CD4-positive, alpha-beta memory T cell (primary cell): ENCODE measurements at regions of chr19 and their contacts with region 1.

Region 1: DNA sequence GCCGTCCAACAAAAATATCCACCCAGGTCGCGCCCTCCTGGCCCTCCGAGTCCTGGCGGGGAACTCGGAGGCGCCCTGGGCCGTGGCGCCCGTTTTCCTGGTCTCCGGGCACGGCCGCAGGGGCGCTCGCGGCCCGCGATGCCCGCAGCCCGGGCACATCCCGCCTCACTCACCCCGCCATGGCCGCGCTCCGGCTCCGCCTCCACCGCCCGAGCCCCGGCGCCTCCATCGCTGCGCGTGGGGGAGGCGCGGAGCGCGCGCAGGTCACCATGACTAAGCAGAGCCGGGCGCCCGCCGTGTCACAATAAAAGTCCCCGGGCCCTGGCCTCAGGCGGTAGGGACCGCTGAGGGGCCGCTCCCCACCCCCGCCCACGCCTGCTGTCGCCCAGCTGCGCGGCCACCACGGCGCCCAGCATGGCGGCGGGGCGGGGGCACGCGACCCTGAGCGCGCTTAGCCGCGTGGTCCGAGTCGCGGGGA is 593 bp downstream of the KEAP1 start:
- DNase-seq: peak; percentile 83 to 88 (median 87)
- H3K4me3 ChIP-seq: peak overlapping the region; percentile 50 to 97
- H3K4me3 Mint-ChIP-seq: peak overlapping the region; percentile 84 to 90 (median 88)
- H3K27ac ChIP-seq: peak overlapping the region; percentile 87
- H3K27ac Mint-ChIP-seq: peak overlapping the region; percentile 81 to 94 (median 90)
- H3K4me1 ChIP-seq: peaks cover 47% of the 10 kb centered on the region
- H3K4me1 Mint-ChIP-seq: peaks cover 21 to 49% (median 35%) of the 10 kb centered on the region in 4 donors
- H3K27me3 ChIP-seq: no peaks in the 10 kb centered on the region
- H3K27me3 Mint-ChIP-seq: no peaks in the 10 kb centered on the region

Region 2: GRCh38 chr19:10422046-10422461 is 80.5 kb before region 1 on chr19:
- CTCF ChIA-PET with region 1: no interaction called
- POLR2A ChIA-PET with region 1: no interaction called
- intact Hi-C with region 1: no loop called
- DNase-seq: no peak
- H3K4me3 ChIP-seq: no peak overlapping the region
- H3K4me3 Mint-ChIP-seq: peak overlapping the region in 5 of 8 donors; percentile 5 to 76 (median 39)
- H3K27ac ChIP-seq: no peak overlapping the region
- H3K27ac Mint-ChIP-seq: peak overlapping the region in 4 of 7 donors; percentile 68 to 99 (median 86)
- H3K4me1 ChIP-seq: peaks cover 73% of the 10 kb centered on the region
- H3K4me1 Mint-ChIP-seq: peaks cover 27 to 71% (median 48%) of the 10 kb centered on the region in 4 donors
- H3K27me3 ChIP-seq: peaks cover 52% of the 10 kb centered on the region
- H3K27me3 Mint-ChIP-seq: peaks cover 38 to 52% of the 10 kb centered on the region in 2 donors

Region 3: DNA sequence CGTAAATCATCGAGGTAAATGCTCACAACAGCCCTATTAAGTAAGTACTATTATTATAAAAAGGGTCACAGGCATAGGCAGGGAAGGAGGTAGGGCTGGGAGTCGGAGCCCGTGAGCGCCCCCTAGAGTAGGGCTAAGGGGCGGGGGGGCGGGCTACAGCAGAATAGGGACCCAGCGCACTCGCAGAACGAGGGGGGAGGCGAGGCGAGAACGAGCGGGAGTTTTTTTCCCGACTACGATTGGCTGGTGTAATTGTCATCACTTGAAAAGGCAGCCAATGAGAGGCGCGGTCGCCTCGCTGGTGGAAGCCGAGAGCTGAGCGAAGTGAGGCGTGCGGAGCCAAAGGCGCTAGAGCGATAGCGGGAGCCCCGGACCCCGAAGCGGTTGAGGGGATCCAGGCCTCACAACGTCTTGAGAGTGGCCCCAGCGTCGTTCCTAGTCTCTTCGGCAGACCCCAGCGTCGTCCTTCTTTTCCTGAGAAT is 23.6 kb before region 1 on chr19:
- CTCF ChIA-PET with region 1: interaction called, 6 read pairs
- POLR2A ChIA-PET with region 1: interaction called, 4 read pairs
- intact Hi-C with region 1: loop called (anchors 2 kb)
- DNase-seq: peak; percentile 87 to 95 (median 90)
- H3K4me3 ChIP-seq: peak overlapping the region in 1 of 2 donors; percentile 38
- H3K4me3 Mint-ChIP-seq: peak overlapping the region; percentile 26 to 79 (median 70)
- H3K27ac ChIP-seq: peak overlapping the region; percentile 57
- H3K27ac Mint-ChIP-seq: peak overlapping the region; percentile 70 to 92 (median 88)
- H3K4me1 ChIP-seq: peaks cover 13% of the 10 kb centered on the region
- H3K4me1 Mint-ChIP-seq: peaks cover 4 to 20% (median 7%) of the 10 kb centered on the region in 4 donors
- H3K27me3 ChIP-seq: no peaks in the 10 kb centered on the region
- H3K27me3 Mint-ChIP-seq: no peaks in the 10 kb centered on the region

Region 4: DNA sequence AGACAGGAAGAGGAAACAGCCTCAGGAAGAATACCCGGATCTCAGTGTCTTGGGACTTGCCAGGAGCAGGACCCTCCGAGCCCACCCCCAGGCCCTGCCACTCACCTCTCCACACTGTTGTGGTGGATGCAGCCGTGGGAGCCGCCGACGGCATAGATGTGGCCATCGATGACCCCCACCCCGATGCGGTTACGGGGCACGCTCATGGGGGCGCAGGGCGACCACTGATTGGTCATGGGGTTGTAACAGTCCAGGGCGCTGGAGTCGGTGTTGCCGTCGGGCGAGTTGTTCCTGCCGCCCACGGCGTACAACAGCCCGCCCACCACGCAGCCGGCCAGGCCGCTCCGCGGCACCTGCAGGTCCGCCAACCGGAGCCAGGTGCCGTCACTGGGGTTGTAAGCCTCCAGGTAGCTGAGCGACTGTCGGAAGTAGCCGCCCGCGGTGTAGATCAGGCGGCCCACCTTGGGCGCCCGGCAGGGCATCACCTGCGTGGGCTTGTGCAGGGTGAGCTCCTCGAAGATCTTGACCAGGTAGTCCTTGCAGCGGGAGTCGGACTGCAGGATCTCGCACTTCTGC is 11.0 kb before region 1 on chr19:
- CTCF ChIA-PET with region 1: interaction called, 10 read pairs
- POLR2A ChIA-PET with region 1: no interaction called
- intact Hi-C with region 1: no loop called
- DNase-seq: no peak
- H3K4me3 ChIP-seq: no peak overlapping the region
- H3K4me3 Mint-ChIP-seq: no peak overlapping the region
- H3K27ac ChIP-seq: no peak overlapping the region
- H3K27ac Mint-ChIP-seq: peak overlapping the region in 1 of 7 donors; percentile 50
- H3K4me1 ChIP-seq: no peaks in the 10 kb centered on the region
- H3K4me1 Mint-ChIP-seq: peaks cover 5 to 10% (median 9%) of the 10 kb centered on the region in 4 donors
- H3K27me3 ChIP-seq: no peaks in the 10 kb centered on the region
- H3K27me3 Mint-ChIP-seq: no peaks in the 10 kb centered on the region

Region 5: GRCh38 chr19:10532457-10532856 is 29.9 kb after region 1 on chr19:
- CTCF ChIA-PET with region 1: no interaction called
- POLR2A ChIA-PET with region 1: no interaction called
- intact Hi-C with region 1: no loop called
- DNase-seq: no peak
- H3K4me3 ChIP-seq: no peak overlapping the region
- H3K4me3 Mint-ChIP-seq: no peak overlapping the region
- H3K27ac ChIP-seq: no peak overlapping the region
- H3K27ac Mint-ChIP-seq: no peak overlapping the region
- H3K4me1 ChIP-seq: no peaks in the 10 kb centered on the region
- H3K4me1 Mint-ChIP-seq: no peaks in the 10 kb centered on the region
- H3K27me3 ChIP-seq: no peaks in the 10 kb centered on the region
- H3K27me3 Mint-ChIP-seq: peaks cover 5 to 7% of the 10 kb centered on the region in 2 donors

Region 6: DNA sequence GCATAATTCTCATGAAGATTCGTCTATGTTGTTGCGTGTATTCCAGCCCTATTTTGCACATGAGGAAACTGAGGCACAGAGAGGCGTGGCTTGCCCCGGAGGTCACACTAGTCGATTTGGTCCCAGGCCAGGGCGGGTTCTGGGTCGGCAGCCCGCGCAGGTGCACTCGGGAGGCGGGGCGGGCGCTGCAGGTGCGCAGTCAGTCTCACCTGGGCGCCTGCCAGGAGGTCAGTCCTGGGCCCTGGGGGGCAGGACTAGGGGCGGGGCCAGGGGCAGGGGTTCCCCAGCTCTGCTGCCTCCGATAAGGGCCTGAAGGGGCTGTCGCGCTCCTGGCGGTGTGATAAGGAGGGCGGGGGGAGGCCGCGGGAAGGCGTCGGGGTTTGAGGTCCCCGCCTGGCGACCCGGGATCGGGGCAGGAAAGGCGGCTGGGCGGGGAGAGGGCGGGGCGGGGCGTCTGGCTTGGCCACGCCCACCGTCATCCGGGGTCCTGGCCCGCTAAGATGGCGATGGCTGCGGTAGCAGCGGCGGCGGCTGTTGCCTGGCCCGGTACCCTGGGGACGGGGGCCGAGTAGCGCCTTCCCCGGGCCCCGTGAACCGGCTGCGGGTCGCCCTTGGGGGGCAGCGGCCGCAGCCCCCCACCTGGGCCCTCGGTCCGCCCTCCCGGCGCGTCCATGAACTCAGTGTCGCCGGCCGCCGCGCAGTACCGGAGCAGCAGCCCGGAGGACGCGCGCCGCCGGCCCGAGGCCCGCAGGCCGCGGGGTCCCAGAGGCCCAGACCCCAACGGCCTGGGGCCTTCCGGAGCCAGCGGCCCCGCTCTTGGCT is 41.1 kb after region 1 on chr19 and contains the start of gene ATG4D:
- CTCF ChIA-PET with region 1: interaction called, 9 read pairs
- POLR2A ChIA-PET with region 1: interaction called, 3 read pairs
- intact Hi-C with region 1: loop called (anchors 2 kb)
- DNase-seq: peak; percentile 85 to 89 (median 85)
- H3K4me3 ChIP-seq: peak within 1 kb of the TSS; percentile 49 to 66
- H3K4me3 Mint-ChIP-seq: peak within 1 kb of the TSS; percentile 89 to 94 (median 91)
- H3K27ac ChIP-seq: peak within 1 kb of the TSS; percentile 86
- H3K27ac Mint-ChIP-seq: peak within 1 kb of the TSS; percentile 83 to 97 (median 91)
- H3K4me1 ChIP-seq: peaks cover 18% of the 10 kb centered on the region
- H3K4me1 Mint-ChIP-seq: peaks cover 9 to 20% (median 14%) of the 10 kb centered on the region in 4 donors
- H3K27me3 ChIP-seq: no peaks in the 10 kb centered on the region
- H3K27me3 Mint-ChIP-seq: peaks cover 5 to 10% of the 10 kb centered on the region in 2 donors
- total RNA-seq, gene ATG4D: 51.5 to 58.6 TPM

Region 7: GRCh38 chr19:10551698-10552301 is 49.2 kb after region 1 on chr19:
- CTCF ChIA-PET with region 1: interaction called, 12 read pairs
- POLR2A ChIA-PET with region 1: no interaction called
- intact Hi-C with region 1: no loop called
- DNase-seq: peak in 3 of 5 donors; percentile 23 to 28 (median 27)
- H3K4me3 ChIP-seq: no peak overlapping the region
- H3K4me3 Mint-ChIP-seq: peak overlapping the region in 1 of 8 donors; percentile 15
- H3K27ac ChIP-seq: peak overlapping the region; percentile 53
- H3K27ac Mint-ChIP-seq: peak overlapping the region; percentile 29 to 86 (median 63)
- H3K4me1 ChIP-seq: peaks cover 51% of the 10 kb centered on the region
- H3K4me1 Mint-ChIP-seq: peaks cover 21 to 50% (median 36%) of the 10 kb centered on the region in 4 donors
- H3K27me3 ChIP-seq: no peaks in the 10 kb centered on the region
- H3K27me3 Mint-ChIP-seq: no peaks in the 10 kb centered on the region

Region 8: DNA sequence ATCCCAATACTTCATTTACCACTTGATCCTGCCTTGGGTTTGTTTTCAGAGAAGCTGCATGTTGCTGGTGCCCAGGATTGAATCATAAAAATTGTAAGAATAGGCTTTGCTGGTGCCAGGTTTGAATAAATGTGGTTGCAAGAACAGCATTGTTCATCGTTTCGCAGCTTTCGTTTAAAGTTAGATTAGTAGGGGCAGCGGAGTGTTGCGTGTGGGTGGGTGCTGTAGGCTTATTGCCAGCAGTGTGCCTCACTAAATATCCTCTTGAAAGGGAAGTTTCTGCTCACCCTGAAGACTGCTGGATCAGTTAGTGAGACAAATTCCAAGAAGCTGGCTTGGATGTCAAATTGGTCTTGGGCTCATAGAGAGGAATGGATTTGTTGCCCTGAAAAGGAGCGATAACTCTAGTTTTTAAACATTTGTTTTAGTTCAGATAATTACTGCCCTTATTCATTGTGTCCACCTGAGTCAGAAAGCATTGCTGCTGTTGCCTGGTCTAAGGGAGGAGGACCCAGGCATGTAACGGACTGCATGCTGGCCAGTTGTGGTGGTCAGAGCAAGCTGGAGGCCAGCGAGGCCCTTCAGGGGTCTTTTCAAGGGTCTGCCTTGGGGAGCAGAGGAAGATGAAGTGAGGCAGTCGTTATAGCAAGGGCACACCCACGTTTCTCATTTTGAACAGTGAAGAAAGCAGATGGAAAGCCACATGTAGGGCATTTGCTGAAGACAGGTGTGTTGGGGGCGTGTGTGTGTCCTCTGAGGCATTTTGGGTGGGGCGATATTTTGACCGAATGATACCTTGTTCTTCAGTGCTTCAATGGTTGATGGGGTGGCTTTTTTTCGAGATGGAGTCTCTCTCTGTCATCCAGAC is 160.1 kb after region 1 on chr19:
- CTCF ChIA-PET with region 1: no interaction called
- POLR2A ChIA-PET with region 1: no interaction called
- intact Hi-C with region 1: no loop called
- DNase-seq: no peak
- H3K4me3 ChIP-seq: no peak overlapping the region
- H3K4me3 Mint-ChIP-seq: peak overlapping the region in 6 of 8 donors; percentile 15 to 64 (median 34)
- H3K27ac ChIP-seq: no peak overlapping the region
- H3K27ac Mint-ChIP-seq: peak overlapping the region; percentile 31 to 78 (median 69)
- H3K4me1 ChIP-seq: peaks cover 79% of the 10 kb centered on the region
- H3K4me1 Mint-ChIP-seq: peaks cover 34 to 75% (median 47%) of the 10 kb centered on the region in 4 donors
- H3K27me3 ChIP-seq: no peaks in the 10 kb centered on the region
- H3K27me3 Mint-ChIP-seq: no peaks in the 10 kb centered on the region